ENCODE measurements at regions of chrX and their contacts with region 1.

Region 1: DNA sequence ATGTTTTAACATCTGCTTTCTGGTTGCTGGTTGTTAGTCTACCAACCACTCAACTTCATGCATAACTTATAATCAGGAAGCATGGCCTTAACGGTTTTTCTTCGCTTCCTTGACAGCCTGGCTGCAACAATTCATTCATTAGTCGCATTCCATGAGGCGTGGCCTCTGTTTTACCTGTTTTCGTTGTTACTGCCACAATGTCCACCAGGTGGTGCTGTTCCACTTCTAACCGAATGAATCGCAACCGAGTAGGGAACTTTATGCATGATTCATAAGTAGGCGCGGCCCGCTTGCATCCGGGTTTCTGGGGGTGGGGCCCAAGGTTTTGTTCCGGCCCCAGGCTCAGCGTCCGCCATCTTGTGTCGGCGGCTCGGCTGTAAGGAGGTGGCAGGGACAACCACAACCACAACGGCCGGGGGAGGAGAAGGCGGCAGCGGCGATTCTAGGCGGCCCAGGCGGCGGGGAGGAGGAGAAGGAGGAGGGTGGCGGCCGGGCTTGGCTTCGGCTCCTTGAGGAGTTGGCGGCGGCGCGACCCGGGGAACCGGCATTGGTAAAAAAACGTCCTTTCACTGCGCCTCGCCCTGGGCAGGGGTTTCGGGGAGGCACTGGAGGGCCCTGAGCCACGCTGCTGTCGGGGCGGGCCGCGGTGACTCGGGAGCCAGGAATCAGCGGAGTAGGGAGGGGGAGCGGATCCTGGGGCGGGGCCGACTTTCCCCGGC is at the start of gene UBA1:
- DNase-seq: peak; percentile 99
- H3K4me3 ChIP-seq: peak within 1 kb of the TSS; percentile 96
- H3K27ac ChIP-seq: peak within 1 kb of the TSS; percentile 98
- H3K4me1 ChIP-seq: peaks cover 17% of the 10 kb centered on the region
- H3K27me3 ChIP-seq: no peaks in the 10 kb centered on the region
- CTCF ChIP-seq: peak; percentile 92
- total RNA-seq, gene UBA1: 413 and 437 TPM in 2 replicates

Region 2: DNA sequence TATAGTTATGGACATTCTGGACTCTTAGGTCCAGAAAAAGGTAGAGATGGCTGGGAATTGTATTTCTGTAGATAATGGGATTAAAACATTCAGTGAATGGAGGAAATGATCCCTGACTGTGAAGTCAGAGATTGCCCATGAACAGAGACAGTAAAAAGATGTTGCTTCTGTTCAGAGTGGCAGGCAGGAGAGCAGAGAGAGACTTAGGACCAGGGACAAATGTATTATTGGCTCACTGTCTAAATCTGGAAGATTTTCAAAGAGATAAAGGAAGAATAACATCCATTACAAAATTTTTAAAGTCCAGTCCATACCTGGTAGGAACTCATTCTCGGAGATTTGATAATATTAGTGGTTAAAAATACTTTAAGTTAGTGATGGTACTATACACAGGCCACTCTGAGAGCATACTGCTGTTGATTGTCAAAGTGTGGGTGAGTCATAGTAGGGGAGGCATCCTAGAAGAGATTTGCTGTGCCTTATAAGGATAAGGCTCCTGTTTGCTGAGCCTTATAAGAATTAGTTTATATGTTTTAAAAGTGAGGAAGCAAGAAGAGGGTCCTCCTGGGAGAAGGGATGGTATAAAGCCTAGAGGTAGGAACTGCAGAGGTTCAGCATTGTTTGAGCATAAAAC is 228.4 kb before region 1 on chrX:
- CTCF ChIA-PET with region 1: no interaction called
- POLR2A ChIA-PET with region 1: no interaction called
- intact Hi-C with region 1: no loop called
- DNase-seq: peak; percentile 28
- H3K4me3 ChIP-seq: no peak overlapping the region
- H3K27ac ChIP-seq: no peak overlapping the region
- H3K4me1 ChIP-seq: peaks cover 67% of the 10 kb centered on the region
- H3K27me3 ChIP-seq: no peaks in the 10 kb centered on the region
- CTCF ChIP-seq: no peak

Region 3: DNA sequence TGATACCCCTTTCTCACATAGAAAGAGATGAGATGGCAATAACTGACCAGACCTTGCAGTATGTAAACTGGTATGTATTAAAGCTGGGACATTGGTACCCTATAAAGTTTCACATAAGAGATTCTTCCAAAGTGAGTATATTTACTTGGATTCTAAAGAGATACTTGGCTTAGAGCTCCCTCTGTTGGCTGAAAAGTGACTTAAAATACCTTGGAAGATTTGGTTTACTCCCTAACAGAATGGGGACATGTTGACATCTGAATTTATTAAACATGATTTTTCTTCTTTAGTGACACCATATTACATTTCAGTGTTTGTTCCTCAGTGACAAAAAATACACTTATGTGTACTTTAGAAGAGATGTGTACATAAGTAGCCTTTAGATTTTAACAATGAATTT is 163.3 kb before region 1 on chrX:
- CTCF ChIA-PET with region 1: no interaction called
- POLR2A ChIA-PET with region 1: no interaction called
- intact Hi-C with region 1: no loop called
- DNase-seq: peak; percentile 85
- H3K4me3 ChIP-seq: no peak overlapping the region
- H3K27ac ChIP-seq: no peak overlapping the region
- H3K4me1 ChIP-seq: no peaks in the 10 kb centered on the region
- H3K27me3 ChIP-seq: no peaks in the 10 kb centered on the region
- CTCF ChIP-seq: peak; percentile 76

Region 4: GRCh38 chrX:47217642-47218279 is 24.1 kb after region 1 on chrX:
- CTCF ChIA-PET with region 1: no interaction called
- POLR2A ChIA-PET with region 1: interaction called, 3 read pairs
- intact Hi-C with region 1: loop called (anchors 1 kb)
- DNase-seq: peak; percentile 100
- H3K4me3 ChIP-seq: peak overlapping the region; percentile 100
- H3K27ac ChIP-seq: peak overlapping the region; percentile 99
- H3K4me1 ChIP-seq: peaks cover 14% of the 10 kb centered on the region
- H3K27me3 ChIP-seq: no peaks in the 10 kb centered on the region
- CTCF ChIP-seq: no peak

Region 5: GRCh38 chrX:47233337-47234113 is 39.9 kb after region 1 on chrX:
- CTCF ChIA-PET with region 1: no interaction called
- POLR2A ChIA-PET with region 1: no interaction called
- intact Hi-C with region 1: loop called (anchors 1 kb)
- DNase-seq: peak; percentile 95
- H3K4me3 ChIP-seq: peak overlapping the region; percentile 73
- H3K27ac ChIP-seq: peak overlapping the region; percentile 98
- H3K4me1 ChIP-seq: no peaks in the 10 kb centered on the region
- H3K27me3 ChIP-seq: no peaks in the 10 kb centered on the region
- CTCF ChIP-seq: no peak

Region 6: DNA sequence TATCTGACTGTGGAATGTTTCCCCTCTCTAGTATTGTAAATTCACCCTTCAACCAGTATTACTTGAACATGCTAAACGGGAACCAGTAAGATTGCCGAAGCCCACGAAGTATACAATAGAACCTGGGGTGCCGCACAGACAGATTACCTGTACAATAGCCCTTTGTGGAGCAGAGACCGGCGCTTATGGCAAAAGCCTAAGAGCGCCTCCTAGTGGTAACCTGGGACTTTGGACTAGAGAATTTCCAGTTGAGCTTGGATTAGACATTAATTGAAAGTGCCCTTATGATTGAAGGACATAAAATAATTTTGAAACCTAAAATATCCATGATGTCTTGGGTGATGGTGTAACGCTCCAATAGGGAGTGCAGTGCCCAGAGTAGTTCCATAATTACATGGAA is 190.9 kb after region 1 on chrX:
- CTCF ChIA-PET with region 1: no interaction called
- POLR2A ChIA-PET with region 1: no interaction called
- intact Hi-C with region 1: loop called (anchors 1 kb)
- DNase-seq: peak; percentile 66
- H3K4me3 ChIP-seq: no peak overlapping the region
- H3K27ac ChIP-seq: no peak overlapping the region
- H3K4me1 ChIP-seq: no peaks in the 10 kb centered on the region
- H3K27me3 ChIP-seq: no peaks in the 10 kb centered on the region
- CTCF ChIP-seq: peak; percentile 88

Region 7: DNA sequence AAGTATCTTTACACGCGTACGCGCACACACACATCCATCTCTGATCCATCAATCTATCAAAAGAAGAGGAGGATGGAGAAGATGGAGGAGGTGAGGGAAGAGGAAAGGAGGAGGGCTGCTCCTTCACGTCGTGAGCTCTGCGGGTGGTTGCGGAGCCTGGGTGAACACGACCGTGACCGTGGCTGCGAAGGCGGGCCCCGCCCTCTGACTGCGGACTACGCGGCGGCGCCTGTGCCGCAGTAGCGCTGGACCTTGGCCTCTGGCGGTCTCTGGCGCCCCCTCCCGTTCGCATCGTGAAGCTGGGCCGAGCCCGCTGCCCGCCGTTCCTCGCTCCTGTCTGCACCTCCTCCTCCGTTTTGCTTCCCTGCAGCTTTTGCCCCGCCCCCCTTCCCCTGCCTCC is 329.7 kb after region 1 on chrX:
- CTCF ChIA-PET with region 1: no interaction called
- POLR2A ChIA-PET with region 1: no interaction called
- intact Hi-C with region 1: loop called (anchors 2 kb)
- DNase-seq: peak; percentile 79
- H3K4me3 ChIP-seq: peak overlapping the region; percentile 55
- H3K27ac ChIP-seq: peak overlapping the region; percentile 50
- H3K4me1 ChIP-seq: no peaks in the 10 kb centered on the region
- H3K27me3 ChIP-seq: no peaks in the 10 kb centered on the region
- CTCF ChIP-seq: peak; percentile 73

Region 8: DNA sequence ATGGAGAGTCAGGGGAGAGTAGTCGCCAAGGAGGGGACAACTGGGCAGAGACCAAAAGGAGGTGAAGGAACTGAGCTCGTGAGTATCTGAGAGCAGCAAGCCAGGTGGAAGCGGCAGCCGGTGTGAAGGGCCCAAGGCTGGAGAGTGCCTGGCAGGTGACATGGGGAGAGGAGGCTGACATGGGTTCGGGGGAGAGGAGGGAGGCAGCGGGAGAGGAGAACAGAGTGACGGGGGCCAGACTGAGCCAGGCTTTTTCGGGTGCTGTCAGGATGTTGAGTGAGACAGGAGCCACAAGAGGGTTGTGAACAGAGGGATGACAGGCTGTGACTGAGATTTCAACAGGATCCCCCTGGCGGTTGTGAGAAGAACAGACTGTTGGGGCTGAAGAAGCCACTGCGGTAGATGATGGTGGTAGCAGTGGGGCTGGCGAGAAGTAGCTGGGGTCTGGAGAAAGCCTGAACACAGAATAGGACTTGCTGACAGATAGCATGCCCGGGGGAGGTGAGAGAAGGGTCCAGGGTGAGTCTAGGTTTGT is 451.0 kb after region 1 on chrX:
- CTCF ChIA-PET with region 1: no interaction called
- POLR2A ChIA-PET with region 1: no interaction called
- intact Hi-C with region 1: loop called (anchors 1 kb)
- DNase-seq: peak; percentile 71
- H3K4me3 ChIP-seq: no peak overlapping the region
- H3K27ac ChIP-seq: no peak overlapping the region
- H3K4me1 ChIP-seq: no peaks in the 10 kb centered on the region
- H3K27me3 ChIP-seq: no peaks in the 10 kb centered on the region
- CTCF ChIP-seq: peak; percentile 58

Measured in A673 (cell line).